Activated CD4-positive, alpha-beta T cell treated with anti-CD3 and anti-CD28 coated beads, Interleukin-2, amount 10 ng/mL, durations not matched to agents 24 days and 14 days (primary cell): ENCODE measurements at regions of chr19 and their contacts with region 1.

Region 1: GRCh38 chr19:44653977-44654774 is 10.5 kb downstream of the PVR start:
- DNase-seq: peak; percentile 91
- H3K4me3 Mint-ChIP-seq: no peak overlapping the region
- H3K27ac Mint-ChIP-seq: no peak overlapping the region
- H3K4me1 Mint-ChIP-seq: peaks cover 11% of the 10 kb centered on the region
- H3K27me3 Mint-ChIP-seq: no peaks in the 10 kb centered on the region

Region 2: GRCh38 chr19:44570984-44571684 is 83.0 kb before region 1 on chr19:
- intact Hi-C with region 1: loop called (anchors 1 kb)
- DNase-seq: peak; percentile 86
- H3K4me3 Mint-ChIP-seq: no peak overlapping the region
- H3K27ac Mint-ChIP-seq: no peak overlapping the region
- H3K4me1 Mint-ChIP-seq: peaks cover 3% of the 10 kb centered on the region
- H3K27me3 Mint-ChIP-seq: peaks cover 2% of the 10 kb centered on the region

Region 3: DNA sequence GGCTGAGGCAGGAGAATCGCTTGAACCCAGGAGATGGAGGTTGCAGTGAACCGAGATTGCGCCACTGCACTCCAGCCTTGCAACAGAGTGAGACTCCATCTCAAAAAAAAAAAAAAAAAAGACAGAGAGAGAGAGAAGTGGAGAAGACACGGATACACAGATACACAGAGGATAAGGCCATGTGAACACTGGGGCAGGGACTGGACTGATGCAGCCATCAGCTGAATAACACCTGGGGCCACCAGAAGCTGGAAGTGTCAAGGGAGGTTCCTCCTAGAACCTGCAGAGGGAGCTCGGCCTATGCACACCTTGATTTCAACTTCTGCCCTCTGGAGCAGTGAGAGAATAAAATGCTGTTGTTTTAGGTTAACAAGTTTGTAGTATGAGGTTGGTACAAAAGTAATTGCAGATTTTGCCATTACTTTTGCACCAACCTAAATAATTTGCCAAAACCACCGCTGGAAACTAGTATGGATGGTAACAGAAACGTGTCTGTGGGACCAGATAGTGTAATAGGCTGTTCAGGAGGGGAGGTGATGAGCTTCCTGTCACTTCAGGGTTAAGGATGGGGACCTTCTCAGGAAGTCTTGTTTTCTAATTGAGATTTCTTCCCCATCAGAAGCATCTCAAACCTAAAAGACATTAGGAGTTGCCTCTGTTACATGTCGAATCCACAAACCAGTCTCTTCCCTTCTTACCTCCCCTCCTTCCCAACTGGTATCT is 77.2 kb before region 1 on chr19:
- intact Hi-C with region 1: loop called (anchors 2 kb)
- DNase-seq: peak; percentile 61
- H3K4me3 Mint-ChIP-seq: no peak overlapping the region
- H3K27ac Mint-ChIP-seq: no peak overlapping the region
- H3K4me1 Mint-ChIP-seq: no peaks in the 10 kb centered on the region
- H3K27me3 Mint-ChIP-seq: no peaks in the 10 kb centered on the region

Region 4: DNA sequence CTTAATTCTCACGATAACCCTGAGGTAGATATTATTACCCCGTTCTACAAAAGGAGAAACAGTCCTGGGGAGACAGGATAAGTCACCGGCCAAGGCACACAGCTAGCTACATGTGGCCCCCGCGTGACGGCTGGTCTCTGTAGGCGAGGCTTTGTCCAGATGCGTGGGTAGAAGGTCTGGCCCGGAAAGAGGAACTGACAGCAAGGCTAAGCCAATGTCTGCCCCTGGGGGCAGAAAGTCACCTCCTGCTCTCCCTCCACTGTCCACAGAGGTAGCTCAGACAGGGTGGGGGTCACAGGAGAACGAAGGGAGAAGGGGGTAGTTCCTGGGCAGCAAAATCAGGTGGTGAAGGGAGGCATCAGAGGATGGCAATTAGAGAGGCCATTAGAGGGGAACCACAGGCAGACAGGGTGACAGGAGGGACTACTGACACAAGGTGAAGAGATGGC is 289.6 kb after region 1 on chr19:
- intact Hi-C with region 1: no loop called
- DNase-seq: no peak
- H3K4me3 Mint-ChIP-seq: no peak overlapping the region
- H3K27ac Mint-ChIP-seq: no peak overlapping the region
- H3K4me1 Mint-ChIP-seq: peaks cover 2% of the 10 kb centered on the region
- H3K27me3 Mint-ChIP-seq: no peaks in the 10 kb centered on the region